Upper lobe of right lung (tissue), 1 donor: ENCODE measurements at regions of chr17 and their contacts with region 1.

Region 1: DNA sequence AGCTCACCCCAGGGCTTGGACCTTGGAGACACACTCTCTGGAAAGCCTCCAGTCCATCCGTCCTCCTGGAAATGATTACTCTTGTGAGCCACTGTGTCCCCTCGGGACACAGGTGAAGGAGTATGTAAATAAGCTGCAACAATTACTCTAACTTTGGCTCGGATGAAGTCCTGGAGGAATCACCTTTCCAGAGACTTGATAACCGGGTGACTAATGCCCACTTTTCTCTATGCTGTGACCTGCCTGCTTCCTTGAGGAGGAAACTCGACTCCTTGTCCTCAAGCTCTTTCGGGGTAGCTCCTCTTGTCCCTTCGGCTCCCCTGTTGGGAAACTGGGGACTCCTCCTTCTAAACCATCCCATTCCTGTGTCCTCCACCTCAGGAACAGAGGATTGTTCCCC is at the start of gene OR1A1:
- DNase-seq: no peak
- ATAC-seq: no peak
- H3K4me3 ChIP-seq: no peak within 1 kb of the TSS
- H3K27ac ChIP-seq: no peak within 1 kb of the TSS
- H3K4me1 ChIP-seq: no peaks in the 10 kb centered on the region
- H3K27me3 ChIP-seq: no peaks in the 10 kb centered on the region
- CTCF ChIP-seq: no peak
- total RNA-seq, gene OR1A1: not detected

Region 2: GRCh38 chr17:2926019-2926650 is 281.2 kb before region 1 on chr17:
- intact Hi-C with region 1: no loop called
- DNase-seq: no peak
- ATAC-seq: peak; percentile 42
- H3K4me3 ChIP-seq: no peak overlapping the region
- H3K27ac ChIP-seq: no peak overlapping the region
- H3K4me1 ChIP-seq: no peaks in the 10 kb centered on the region
- H3K27me3 ChIP-seq: no peaks in the 10 kb centered on the region
- CTCF ChIP-seq: no peak

Region 3: GRCh38 chr17:3271072-3271848 is 63.9 kb after region 1 on chr17:
- intact Hi-C with region 1: no loop called
- DNase-seq: no peak
- ATAC-seq: peak; percentile 71
- H3K4me3 ChIP-seq: no peak overlapping the region
- H3K27ac ChIP-seq: no peak overlapping the region
- H3K4me1 ChIP-seq: no peaks in the 10 kb centered on the region
- H3K27me3 ChIP-seq: no peaks in the 10 kb centered on the region
- CTCF ChIP-seq: no peak

Region 4: GRCh38 chr17:3308603-3309002 is 101.2 kb after region 1 on chr17:
- intact Hi-C with region 1: no loop called
- DNase-seq: no peak
- ATAC-seq: no peak
- H3K4me3 ChIP-seq: no peak overlapping the region
- H3K27ac ChIP-seq: no peak overlapping the region
- H3K4me1 ChIP-seq: no peaks in the 10 kb centered on the region
- H3K27me3 ChIP-seq: no peaks in the 10 kb centered on the region
- CTCF ChIP-seq: no peak

Region 5: GRCh38 chr17:3415610-3416009 is 208.2 kb after region 1 on chr17:
- intact Hi-C with region 1: loop called (anchors 10 kb)
- DNase-seq: no peak
- ATAC-seq: no peak
- H3K4me3 ChIP-seq: no peak overlapping the region
- H3K27ac ChIP-seq: no peak overlapping the region
- H3K4me1 ChIP-seq: no peaks in the 10 kb centered on the region
- H3K27me3 ChIP-seq: no peaks in the 10 kb centered on the region
- CTCF ChIP-seq: no peak